PC-9 (cell line): ENCODE measurements at regions of chr9 and their contacts with region 1.

Region 1: GRCh38 chr9:89137542-89138462 is 40.8 kb downstream of the SHC3 start:
- DNase-seq: peak; percentile 80
- H3K4me3 ChIP-seq: no peak overlapping the region
- H3K27ac ChIP-seq: peak overlapping the region; percentile 64
- H3K4me1 ChIP-seq: peaks cover 37% of the 10 kb centered on the region
- H3K27me3 ChIP-seq: no peaks in the 10 kb centered on the region
- CTCF ChIP-seq: no peak

Region 2: GRCh38 chr9:88433583-88434255 is 704.1 kb before region 1 on chr9:
- CTCF ChIA-PET with region 1: no interaction called
- POLR2A ChIA-PET with region 1: no interaction called
- intact Hi-C with region 1: no loop called
- DNase-seq: no peak
- H3K4me3 ChIP-seq: no peak overlapping the region
- H3K27ac ChIP-seq: no peak overlapping the region
- H3K4me1 ChIP-seq: 0 out of 2 replicates have a peak, but pooled peaks cover 5% of the 10 kb centered on the region
- H3K27me3 ChIP-seq: no peaks in the 10 kb centered on the region
- CTCF ChIP-seq: no peak

Region 3: GRCh38 chr9:88998503-88998902 is 139.3 kb before region 1 on chr9:
- CTCF ChIA-PET with region 1: no interaction called
- POLR2A ChIA-PET with region 1: no interaction called
- intact Hi-C with region 1: no loop called
- DNase-seq: peak in 1 of 2 experiments; percentile 49
- H3K4me3 ChIP-seq: no peak overlapping the region
- H3K27ac ChIP-seq: no peak overlapping the region
- H3K4me1 ChIP-seq: 0 out of 2 replicates have a peak, but pooled peaks cover 7% of the 10 kb centered on the region
- H3K27me3 ChIP-seq: no peaks in the 10 kb centered on the region
- CTCF ChIP-seq: no peak

Region 4: GRCh38 chr9:89154651-89155336 is 17.0 kb after region 1 on chr9:
- CTCF ChIA-PET with region 1: interaction called, 9 read pairs
- POLR2A ChIA-PET with region 1: interaction called, 7 read pairs
- intact Hi-C with region 1: loop called (anchors 1 kb)
- DNase-seq: peak; percentile 43 to 82
- H3K4me3 ChIP-seq: no peak overlapping the region
- H3K27ac ChIP-seq: peak overlapping the region; percentile 87
- H3K4me1 ChIP-seq: peaks cover 25% of the 10 kb centered on the region
- H3K27me3 ChIP-seq: no peaks in the 10 kb centered on the region
- CTCF ChIP-seq: no peak

Region 5: GRCh38 chr9:89179895-89180667 is 42.3 kb after region 1 on chr9:
- CTCF ChIA-PET with region 1: no interaction called
- POLR2A ChIA-PET with region 1: interaction called, 7 read pairs
- intact Hi-C with region 1: loop called (anchors 1 kb)
- DNase-seq: peak; percentile 93 to 95
- H3K4me3 ChIP-seq: peak overlapping the region; percentile 62
- H3K27ac ChIP-seq: peak overlapping the region; percentile 78
- H3K4me1 ChIP-seq: peaks cover 34% of the 10 kb centered on the region
- H3K27me3 ChIP-seq: no peaks in the 10 kb centered on the region
- CTCF ChIP-seq: no peak

Region 6: DNA sequence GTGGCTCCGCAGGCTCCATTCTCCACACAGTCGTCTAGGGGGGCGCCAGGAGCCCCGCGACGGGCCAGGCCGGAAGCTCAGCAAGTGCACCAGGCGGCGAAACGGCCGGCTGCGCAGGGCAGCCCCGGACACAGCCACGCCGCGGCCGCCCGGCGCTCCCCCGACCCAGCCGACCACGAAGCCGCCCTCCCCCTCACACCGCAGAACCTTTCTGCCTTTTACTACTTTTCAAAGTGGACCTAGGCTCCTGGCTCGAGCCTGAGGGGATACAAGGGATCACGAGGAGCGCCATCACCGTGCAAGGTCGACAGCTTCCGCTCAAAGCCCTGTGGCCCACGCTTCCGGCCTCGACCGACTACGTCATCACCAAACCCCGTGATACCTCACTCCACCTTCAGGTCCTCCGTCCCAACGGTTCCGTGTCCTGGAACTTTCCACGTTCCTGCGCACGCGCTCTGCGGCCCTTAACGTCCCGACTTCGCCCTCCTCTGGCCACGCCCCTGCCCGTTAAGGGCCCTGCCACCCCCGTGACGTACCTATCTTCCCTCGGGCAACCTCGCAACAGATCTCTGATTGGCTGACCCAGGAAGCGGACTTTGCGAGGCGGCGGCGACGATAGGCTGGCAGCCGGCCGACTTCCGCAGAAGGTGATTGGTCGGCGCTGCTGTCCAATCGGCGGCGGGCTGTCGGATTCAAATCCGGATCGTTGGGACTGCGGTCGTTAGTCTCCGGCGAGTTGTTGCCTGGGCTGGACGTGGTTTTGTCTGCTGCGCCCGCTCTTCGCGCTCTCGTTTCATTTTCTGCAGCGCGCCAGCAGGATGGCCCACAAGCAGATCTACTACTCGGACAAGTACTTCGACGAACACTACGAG is 172.9 kb after region 1 on chr9 and contains the start of gene CKS2:
- CTCF ChIA-PET with region 1: no interaction called
- POLR2A ChIA-PET with region 1: no interaction called
- intact Hi-C with region 1: loop called (anchors 5 kb)
- DNase-seq: peak; percentile 99 to 100
- H3K4me3 ChIP-seq: peak within 1 kb of the TSS; percentile 91
- H3K27ac ChIP-seq: peak within 1 kb of the TSS; percentile 93
- H3K4me1 ChIP-seq: peaks cover 36% of the 10 kb centered on the region
- H3K27me3 ChIP-seq: no peaks in the 10 kb centered on the region
- CTCF ChIP-seq: no peak
- total RNA-seq, gene CKS2: 138 and 260 TPM in 2 replicates